H1 (cell line): ENCODE measurements at regions of chr2 and their contacts with region 1.

Region 1: DNA sequence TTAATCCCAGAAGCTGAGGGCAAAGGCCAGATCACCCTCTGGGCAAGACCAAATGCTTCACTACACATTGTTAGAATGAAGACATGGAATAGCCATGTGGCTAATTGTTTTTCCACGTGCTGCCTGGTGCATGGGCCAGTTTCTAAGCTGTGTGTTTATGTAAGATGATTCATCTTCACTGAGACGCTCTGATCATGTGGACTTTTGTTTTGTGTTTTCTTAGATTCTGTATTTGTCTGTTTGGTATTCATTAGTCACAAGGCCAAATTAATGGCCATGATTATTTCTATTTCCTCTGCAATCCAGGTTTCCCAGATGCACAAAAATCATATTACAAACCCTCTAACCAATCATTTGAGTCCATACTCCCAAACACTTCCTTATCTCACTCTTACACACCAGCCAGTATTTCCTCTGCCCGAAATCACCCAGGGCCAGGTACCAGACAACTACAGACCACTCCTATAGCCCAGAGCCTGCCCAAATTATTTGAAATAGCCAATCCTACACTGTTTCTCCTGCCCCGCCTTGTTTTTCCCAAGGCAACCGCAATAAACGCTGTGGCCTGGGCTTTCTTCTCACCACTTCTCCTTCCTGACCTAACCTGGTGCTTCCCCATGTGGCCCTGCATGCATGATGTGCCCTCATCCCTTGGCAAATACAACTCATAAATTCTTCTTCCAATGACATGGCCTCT is 94.2 kb upstream of the SP3 start:
- DNase-seq: no peak
- H3K4me3 ChIP-seq: no peak overlapping the region
- H3K27ac ChIP-seq: no peak overlapping the region
- H3K4me1 ChIP-seq: peaks cover 0 to 12% (median 4%) of the 10 kb centered on the region in 4 experiments; a peak in 3 of 7 replicates
- H3K27me3 ChIP-seq: no peaks in the 10 kb centered on the region
- CTCF ChIP-seq: no peak
- EP300 ChIP-seq: no peak
- POLR2A ChIP-seq: no peak
- RAD21 ChIP-seq: no peak

Region 2: GRCh38 chr2:174078275-174078674 is 18.9 kb after region 1 on chr2:
- CTCF ChIA-PET with region 1: interaction called, 13 read pairs
- POLR2A ChIA-PET with region 1: no interaction called
- DNase-seq: no peak
- H3K4me3 ChIP-seq: no peak overlapping the region
- H3K27ac ChIP-seq: no peak overlapping the region
- H3K4me1 ChIP-seq: no peaks in the 10 kb centered on the region; a peak in 1 of 7 replicates
- H3K27me3 ChIP-seq: no peaks in the 10 kb centered on the region
- CTCF ChIP-seq: peak in 1 of 3 experiments; percentile 40; a peak in 2 of 4 replicates
- EP300 ChIP-seq: no peak
- POLR2A ChIP-seq: no peak
- RAD21 ChIP-seq: peak in 1 of 2 experiments; percentile 14; a peak in 2 of 4 replicates

Region 3: GRCh38 chr2:174090476-174090875 is 31.1 kb after region 1 on chr2:
- CTCF ChIA-PET with region 1: no interaction called
- POLR2A ChIA-PET with region 1: no interaction called
- DNase-seq: no peak
- H3K4me3 ChIP-seq: no peak overlapping the region
- H3K27ac ChIP-seq: no peak overlapping the region
- H3K4me1 ChIP-seq: no peaks in the 10 kb centered on the region
- H3K27me3 ChIP-seq: no peaks in the 10 kb centered on the region
- CTCF ChIP-seq: no peak
- EP300 ChIP-seq: no peak
- POLR2A ChIP-seq: no peak
- RAD21 ChIP-seq: no peak